Tibial artery (tissue), 4 donors: ENCODE measurements at regions of chr22 and their contacts with region 1.

Region 1: DNA sequence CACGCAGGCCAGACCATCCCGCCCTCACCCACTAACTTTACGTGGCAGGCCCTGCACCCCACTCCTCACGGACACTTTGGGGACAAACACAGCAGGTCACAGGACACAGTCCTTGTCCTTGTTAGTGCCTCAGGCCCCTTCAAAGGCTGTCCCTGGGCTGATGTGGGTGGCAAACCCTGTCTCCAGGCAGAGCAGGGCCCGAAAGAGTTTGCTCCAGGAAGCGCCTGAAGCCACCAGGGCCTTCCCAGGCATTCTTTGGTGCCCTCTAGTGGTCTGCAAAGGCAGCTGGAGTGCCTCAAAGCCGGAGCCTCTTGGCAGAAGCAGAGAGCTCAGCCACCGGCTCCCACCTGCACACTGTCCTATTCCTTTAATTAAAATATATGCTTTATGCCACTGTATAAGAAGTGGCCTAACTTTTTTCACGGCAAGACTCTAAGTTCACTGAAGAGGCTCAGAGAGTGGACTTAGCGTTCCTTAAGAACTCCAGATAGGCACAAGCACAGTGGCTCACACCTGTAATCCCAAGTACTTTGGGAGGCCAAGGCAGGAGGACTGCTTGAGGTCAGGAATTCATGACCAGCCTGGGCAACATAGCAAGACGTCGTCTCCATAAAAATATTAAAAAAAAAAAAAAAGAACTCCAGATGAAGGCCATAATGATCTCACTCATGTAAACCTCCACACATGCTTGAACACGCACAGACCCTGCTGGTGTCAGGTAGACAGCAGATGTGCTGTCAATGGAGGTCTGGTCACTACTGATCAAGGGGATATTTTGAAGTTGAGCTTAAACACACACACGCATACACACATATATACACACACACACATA is 11.1 kb downstream of the TXN2 start:
- DNase-seq: peak; percentile 73 to 92
- H3K4me3 ChIP-seq: peak overlapping the region; percentile 42 to 44
- H3K27ac ChIP-seq: peak overlapping the region; percentile 78 to 95
- H3K4me1 ChIP-seq: peaks cover 0 to 95% (median 59%) of the 10 kb centered on the region in 4 donors
- H3K27me3 ChIP-seq: no peaks in the 10 kb centered on the region
- CTCF ChIP-seq: peak; percentile 92 to 97

Region 2: DNA sequence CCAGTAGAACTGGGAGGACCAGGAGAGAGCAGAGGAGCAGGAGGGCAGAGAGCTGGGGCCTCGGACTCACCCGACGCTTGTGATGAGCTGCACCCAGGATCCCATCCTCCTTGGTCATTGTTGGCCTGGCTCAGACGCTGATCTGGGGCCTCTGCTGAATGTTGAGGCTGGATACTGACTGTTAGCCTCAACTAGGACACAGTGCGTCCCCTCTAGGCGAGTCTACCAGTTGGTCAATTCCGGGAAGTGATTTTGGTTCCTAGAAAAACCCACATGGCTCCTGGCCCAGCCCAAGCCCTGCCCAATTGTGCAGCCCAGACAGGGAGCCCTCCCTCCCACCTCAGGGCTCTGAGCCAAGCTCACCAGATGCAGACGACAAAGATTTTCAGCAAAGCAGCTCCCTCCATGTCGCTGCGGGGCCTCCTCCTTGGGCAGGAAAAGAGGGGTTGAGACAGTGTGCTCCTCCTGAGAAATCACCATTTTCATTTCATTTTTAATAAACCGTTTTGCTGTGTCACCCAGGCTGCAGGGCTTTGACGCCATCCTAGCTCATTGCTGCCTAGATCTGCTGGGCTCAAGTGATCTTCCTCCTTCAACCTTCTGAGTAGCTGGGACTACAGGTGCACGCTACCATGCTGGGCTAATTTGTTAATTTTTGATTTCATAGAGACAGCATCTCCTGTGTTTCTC is 268.6 kb before region 1 on chr22 and contains the start of gene APOL4:
- intact Hi-C with region 1: no loop called
- DNase-seq: peak; percentile 66 to 78
- H3K4me3 ChIP-seq: peak within 1 kb of the TSS in 1 of 2 donors; percentile 8
- H3K27ac ChIP-seq: no peak within 1 kb of the TSS
- H3K4me1 ChIP-seq: peaks cover 0 to 2% (median 0%) of the 10 kb centered on the region in 4 donors
- H3K27me3 ChIP-seq: peaks cover 0 to 4% of the 10 kb centered on the region in 2 donors
- CTCF ChIP-seq: no peak

Region 3: DNA sequence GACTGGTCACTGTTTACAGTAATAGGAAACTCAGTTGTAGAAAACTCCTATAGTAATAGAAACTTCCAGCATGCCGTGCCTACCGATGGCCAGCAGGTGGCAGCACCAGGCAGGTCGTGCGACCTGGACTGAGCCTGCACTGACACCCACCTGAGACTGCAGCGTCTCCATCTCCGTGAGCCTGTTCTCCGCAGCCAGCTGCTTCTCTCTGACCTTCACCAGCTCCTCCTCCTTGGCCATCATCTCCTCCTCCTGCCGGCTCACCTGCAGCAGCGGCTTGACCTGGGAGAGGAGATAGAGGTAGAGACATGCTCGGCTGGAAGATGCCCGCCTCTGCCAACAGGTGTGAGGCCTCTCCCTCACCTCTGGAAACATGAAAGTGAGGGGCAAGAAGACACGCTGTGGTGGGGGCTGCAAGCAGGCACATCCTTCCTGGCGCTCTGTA is 169.0 kb before region 1 on chr22:
- intact Hi-C with region 1: loop called (anchors 5 kb)
- DNase-seq: peak; percentile 58 to 83
- H3K4me3 ChIP-seq: no peak overlapping the region
- H3K27ac ChIP-seq: peak overlapping the region in 1 of 2 donors; percentile 45
- H3K4me1 ChIP-seq: peaks cover 0 to 7% (median 0%) of the 10 kb centered on the region in 4 donors
- H3K27me3 ChIP-seq: no peaks in the 10 kb centered on the region
- CTCF ChIP-seq: peak; percentile 94 to 96

Region 4: DNA sequence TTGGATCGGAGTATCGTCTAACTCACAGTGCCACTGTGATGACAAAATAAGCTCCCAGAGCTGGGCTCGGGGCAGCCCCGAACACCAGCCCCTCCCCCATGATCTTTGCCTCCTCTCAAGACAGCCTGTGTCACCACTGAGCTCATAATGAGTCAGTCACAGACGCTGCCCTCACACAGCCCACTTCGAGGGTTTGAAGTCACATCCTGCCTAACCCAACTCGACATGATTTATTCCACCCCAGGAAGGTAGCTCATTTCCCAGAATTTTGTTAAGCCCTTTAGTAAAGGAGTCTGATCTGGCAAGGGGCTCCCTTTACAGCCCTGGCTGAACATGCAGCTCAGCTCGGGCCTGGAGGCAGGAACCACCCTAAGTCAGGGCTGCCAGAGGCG is 105.4 kb before region 1 on chr22:
- intact Hi-C with region 1: loop called (anchors 5 kb)
- DNase-seq: peak; percentile 79 to 93
- H3K4me3 ChIP-seq: peak overlapping the region; percentile 22 to 40
- H3K27ac ChIP-seq: peak overlapping the region; percentile 95
- H3K4me1 ChIP-seq: peaks cover 0 to 100% (median 98%) of the 10 kb centered on the region in 4 donors
- H3K27me3 ChIP-seq: no peaks in the 10 kb centered on the region
- CTCF ChIP-seq: no peak

Region 5: DNA sequence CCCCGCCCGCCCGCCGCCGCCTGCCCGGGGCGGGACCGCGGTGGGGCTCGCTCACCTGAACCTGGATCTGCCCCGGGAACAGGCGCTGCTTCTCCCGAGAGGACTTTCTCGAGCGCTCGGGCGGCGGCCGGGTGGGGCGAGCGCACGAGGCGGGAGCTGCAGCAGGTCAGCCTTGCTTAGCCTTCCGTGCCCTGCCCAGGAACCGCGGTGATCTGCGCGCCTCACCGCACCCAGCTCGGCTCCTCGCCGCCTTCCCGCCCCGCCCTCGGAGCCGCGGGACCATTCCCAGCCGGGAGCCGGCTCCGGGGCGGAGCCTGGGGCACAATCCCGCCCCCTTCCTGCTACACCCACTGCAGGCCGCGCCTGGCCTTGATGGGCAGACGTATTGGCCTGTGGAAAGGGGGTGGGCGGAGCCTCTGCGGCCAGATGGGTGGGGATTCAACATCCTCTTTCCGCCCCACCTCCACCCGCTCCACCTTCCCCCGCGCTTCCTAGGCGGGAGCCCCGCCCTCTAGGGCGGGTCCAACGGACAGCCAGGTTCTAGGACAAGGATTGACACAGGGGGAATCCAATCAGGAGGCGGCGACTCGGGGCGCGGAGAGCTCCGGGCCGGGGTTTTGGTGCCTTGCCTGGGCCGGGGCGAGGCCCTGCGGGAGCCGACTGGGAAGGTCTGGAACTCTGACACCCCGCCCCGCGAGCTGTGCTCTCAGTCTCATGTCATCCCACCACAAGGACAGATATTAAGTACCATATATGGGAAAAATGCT is 82.4 kb before region 1 on chr22 and contains the start of gene MYH9:
- intact Hi-C with region 1: no loop called
- DNase-seq: peak; percentile 100
- H3K4me3 ChIP-seq: peak within 1 kb of the TSS; percentile 89 to 94
- H3K27ac ChIP-seq: peak within 1 kb of the TSS; percentile 95 to 98
- H3K4me1 ChIP-seq: peaks cover 0 to 32% (median 21%) of the 10 kb centered on the region in 4 donors
- H3K27me3 ChIP-seq: no peaks in the 10 kb centered on the region
- CTCF ChIP-seq: no peak

Region 6: GRCh38 chr22:36587289-36588154 is 117.1 kb after region 1 on chr22:
- intact Hi-C with region 1: no loop called
- DNase-seq: no peak
- H3K4me3 ChIP-seq: no peak overlapping the region
- H3K27ac ChIP-seq: no peak overlapping the region
- H3K4me1 ChIP-seq: no peaks in the 10 kb centered on the region
- H3K27me3 ChIP-seq: peaks cover 0 to 55% of the 10 kb centered on the region in 2 donors
- CTCF ChIP-seq: no peak